Left ventricle myocardium inferior (tissue), 1 donor: ENCODE measurements at regions of chr5 and their contacts with region 1.

Region 1: DNA sequence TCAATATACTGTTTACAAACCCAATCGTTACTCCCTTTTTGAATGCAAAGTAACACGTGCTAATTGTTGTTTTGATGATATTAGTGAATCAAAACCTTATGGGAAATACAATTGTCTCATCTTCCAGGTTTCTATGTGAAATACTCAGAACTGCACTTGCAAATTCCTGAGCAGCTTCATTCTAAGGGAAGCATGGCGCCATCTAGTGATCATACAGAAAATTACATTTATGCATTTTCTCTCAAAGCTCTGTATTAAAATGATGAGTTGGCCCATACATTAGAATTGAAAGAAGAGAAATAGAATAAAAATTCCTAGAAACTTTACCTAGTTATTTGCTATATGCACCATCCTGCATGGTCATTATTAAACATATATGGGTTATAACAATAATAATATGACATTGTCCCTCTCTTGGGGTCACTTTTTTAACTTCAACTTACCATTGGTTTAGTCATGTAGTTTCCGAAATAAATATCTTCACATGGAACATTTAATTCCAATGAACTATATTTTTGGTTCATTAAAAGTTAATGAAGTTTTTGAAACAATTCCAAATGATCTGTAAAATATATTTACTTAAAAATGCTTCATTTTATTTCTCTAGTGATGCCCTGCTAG is 220.0 kb downstream of the PDE4D start:
- DNase-seq: no peak
- H3K4me3 ChIP-seq: no peak overlapping the region
- H3K27ac ChIP-seq: no peak overlapping the region
- H3K4me1 ChIP-seq: no peaks in the 10 kb centered on the region
- H3K27me3 ChIP-seq: no peaks in the 10 kb centered on the region
- CTCF ChIP-seq: peak; percentile 91

Region 2: DNA sequence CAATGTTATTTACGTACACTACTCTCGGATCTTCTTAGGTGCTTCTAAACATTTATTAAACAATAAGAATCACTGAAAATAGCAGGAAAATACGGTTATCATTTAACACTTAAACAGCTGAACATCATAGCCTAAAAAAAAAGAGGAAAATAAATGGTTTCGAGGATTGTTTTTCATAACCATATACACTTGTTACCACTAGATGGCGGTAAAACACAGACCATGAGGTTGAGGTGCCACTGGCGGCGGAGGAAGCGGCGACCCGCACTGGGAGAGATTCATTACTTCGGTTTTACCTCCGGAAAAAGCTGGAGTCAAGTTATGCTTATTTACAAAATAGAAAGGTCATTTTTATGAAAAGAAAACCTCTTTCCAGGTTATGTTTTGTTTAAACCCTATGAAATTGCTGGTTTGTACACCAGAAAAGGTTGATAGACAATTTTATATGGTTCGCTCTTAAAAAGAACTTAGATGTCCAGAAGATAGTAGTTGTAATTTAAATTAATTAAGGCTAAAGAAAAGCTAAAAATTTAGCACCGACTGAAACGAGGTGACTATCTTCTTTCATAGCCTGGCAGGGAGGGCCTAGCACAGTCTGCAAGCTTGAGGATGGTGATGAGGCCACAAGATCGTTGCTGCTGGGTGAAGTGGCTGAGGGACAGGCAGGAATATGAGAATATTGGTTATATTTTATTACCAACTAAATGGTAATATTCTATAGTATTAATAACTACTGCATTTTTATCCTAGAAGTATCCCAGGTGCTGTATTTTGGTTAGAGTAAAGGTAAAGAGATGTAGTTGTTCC is 484.9 kb before region 1 on chr5:
- intact Hi-C with region 1: loop called (anchors 10 kb)
- DNase-seq: peak; percentile 67
- H3K4me3 ChIP-seq: peak overlapping the region; percentile 55
- H3K27ac ChIP-seq: peak overlapping the region; percentile 59
- H3K4me1 ChIP-seq: peaks cover 31% of the 10 kb centered on the region
- H3K27me3 ChIP-seq: no peaks in the 10 kb centered on the region
- CTCF ChIP-seq: peak; percentile 86

Region 3: GRCh38 chr5:59231221-59231931 is 442.2 kb before region 1 on chr5:
- intact Hi-C with region 1: no loop called
- DNase-seq: no peak
- H3K4me3 ChIP-seq: no peak overlapping the region
- H3K27ac ChIP-seq: no peak overlapping the region
- H3K4me1 ChIP-seq: peaks cover 19% of the 10 kb centered on the region
- H3K27me3 ChIP-seq: no peaks in the 10 kb centered on the region
- CTCF ChIP-seq: no peak

Region 4: GRCh38 chr5:59390074-59390659 is 283.4 kb before region 1 on chr5:
- intact Hi-C with region 1: loop called (anchors 2 kb)
- DNase-seq: no peak
- H3K4me3 ChIP-seq: no peak overlapping the region
- H3K27ac ChIP-seq: no peak overlapping the region
- H3K4me1 ChIP-seq: no peaks in the 10 kb centered on the region
- H3K27me3 ChIP-seq: no peaks in the 10 kb centered on the region
- CTCF ChIP-seq: peak; percentile 80

Region 5: DNA sequence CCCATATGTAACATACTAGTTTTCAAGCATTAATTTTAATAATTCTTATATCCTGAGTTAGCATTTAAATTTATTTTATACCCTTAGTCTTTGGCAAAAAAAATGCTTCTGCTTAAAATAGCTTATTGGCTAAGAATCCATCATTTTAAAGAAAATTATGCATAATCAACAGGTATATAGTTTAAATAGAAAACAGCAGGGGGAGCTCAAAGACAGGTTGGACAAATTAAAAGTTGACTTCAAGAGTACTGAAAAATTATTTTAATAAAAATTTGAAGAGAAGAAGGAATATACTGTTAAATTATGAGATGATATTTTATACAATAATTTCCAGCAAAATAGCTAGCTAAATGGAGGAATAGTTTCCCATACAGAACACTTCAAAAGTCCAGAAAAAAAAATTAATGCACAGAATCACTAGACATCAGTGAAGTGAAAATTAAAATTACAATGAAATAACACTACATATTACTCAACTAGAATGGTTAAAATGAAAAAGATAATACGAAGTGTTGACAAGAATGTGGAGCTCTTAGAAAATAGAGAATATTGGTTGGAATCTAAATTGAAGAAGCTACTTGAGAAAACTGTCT is 167.2 kb before region 1 on chr5:
- intact Hi-C with region 1: loop called (anchors 5 kb)
- DNase-seq: no peak
- H3K4me3 ChIP-seq: no peak overlapping the region
- H3K27ac ChIP-seq: no peak overlapping the region
- H3K4me1 ChIP-seq: no peaks in the 10 kb centered on the region
- H3K27me3 ChIP-seq: no peaks in the 10 kb centered on the region
- CTCF ChIP-seq: peak; percentile 69

Region 6: GRCh38 chr5:59799668-59800346 is 126.3 kb after region 1 on chr5:
- intact Hi-C with region 1: loop called (anchors 10 kb)
- DNase-seq: no peak
- H3K4me3 ChIP-seq: peak overlapping the region; percentile 28
- H3K27ac ChIP-seq: peak overlapping the region; percentile 30
- H3K4me1 ChIP-seq: peaks cover 16% of the 10 kb centered on the region
- H3K27me3 ChIP-seq: peaks cover 12% of the 10 kb centered on the region
- CTCF ChIP-seq: peak; percentile 87